KBM-7 (cell line): ENCODE measurements at regions of chr2 and their contacts with region 1.

Region 1: GRCh38 chr2:191811807-191812602 is 34.9 kb downstream of the CAVIN2 start:
- DNase-seq: peak; percentile 68

Region 2: GRCh38 chr2:191474464-191474863 is 337.5 kb before region 1 on chr2:
- in situ Hi-C with region 1: no loop called
- DNase-seq: no peak

Region 3: GRCh38 chr2:191555092-191555742 is 256.8 kb before region 1 on chr2:
- in situ Hi-C with region 1: loop called (anchors 25 kb)
- DNase-seq: peak; percentile 81

Region 4: DNA sequence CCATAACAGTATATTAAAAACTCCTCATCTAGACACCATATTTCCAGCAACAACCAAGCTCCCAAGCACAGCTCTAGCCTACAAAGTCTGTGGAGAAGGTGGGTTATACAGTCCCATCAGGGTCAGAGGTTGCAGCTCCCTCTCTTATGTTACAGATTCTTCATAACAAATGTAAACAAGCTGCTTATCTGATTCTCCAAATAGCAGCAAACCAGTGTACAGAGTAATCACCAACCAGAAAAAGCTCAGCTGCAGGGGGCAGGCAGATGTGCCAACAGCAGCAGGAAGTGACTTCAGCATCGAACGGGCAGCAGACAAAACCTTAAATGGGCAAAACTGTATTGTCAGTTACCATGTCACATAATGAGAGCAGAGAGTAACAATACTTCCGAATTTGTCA is 187.0 kb before region 1 on chr2:
- in situ Hi-C with region 1: no loop called
- DNase-seq: peak; percentile 83